Activated naive CD4-positive, alpha-beta T cell treated with anti-CD3 and anti-CD28 coated beads for 36 hours (primary cell): ENCODE measurements at regions of chr9 and their contacts with region 1.

Region 1: DNA sequence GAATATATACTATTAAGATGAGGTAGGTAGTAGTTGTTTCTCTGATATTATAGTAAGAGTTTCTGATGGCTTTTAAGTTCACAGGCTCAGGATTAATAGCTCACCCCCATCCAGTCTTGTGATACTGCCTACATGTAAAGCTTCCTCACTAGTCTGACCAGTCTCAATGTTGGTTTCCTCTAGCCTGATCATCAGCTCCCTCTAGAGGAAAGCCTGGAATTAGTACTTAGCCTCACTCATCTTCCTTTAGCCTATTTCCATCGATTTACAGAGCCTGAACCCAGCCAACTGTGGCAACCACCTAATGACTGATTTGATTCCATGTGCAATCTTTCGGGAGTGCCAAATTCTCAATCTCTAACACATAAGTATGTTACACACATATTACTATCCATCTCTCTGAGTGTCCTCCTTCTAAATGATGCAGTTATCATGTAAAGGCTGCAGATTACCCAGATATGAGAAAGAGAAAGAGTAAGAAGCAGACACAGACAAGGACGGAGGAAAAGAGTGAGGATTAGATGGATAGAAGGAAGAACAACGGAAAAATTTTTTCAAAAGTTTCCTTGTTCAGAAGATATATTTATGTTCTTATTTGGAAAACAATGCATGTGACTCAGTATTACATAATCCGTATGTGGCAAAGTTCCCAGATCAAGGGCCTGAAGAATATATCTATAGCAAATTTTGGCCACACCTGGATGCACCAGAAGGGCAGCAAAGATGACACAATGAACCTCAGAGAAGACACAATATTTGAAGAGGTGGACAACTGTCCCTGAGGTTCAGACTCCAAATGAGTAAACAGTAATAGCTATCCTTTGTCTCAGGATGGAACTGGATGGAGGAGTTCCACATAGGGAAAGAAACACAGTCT is 333.7 kb downstream of the ELAVL2 start:
- DNase-seq: no peak
- H3K4me3 Mint-ChIP-seq: no peak overlapping the region
- H3K27ac Mint-ChIP-seq: no peak overlapping the region
- H3K4me1 Mint-ChIP-seq: no peaks in the 10 kb centered on the region
- H3K27me3 Mint-ChIP-seq: no peaks in the 10 kb centered on the region

Region 2: DNA sequence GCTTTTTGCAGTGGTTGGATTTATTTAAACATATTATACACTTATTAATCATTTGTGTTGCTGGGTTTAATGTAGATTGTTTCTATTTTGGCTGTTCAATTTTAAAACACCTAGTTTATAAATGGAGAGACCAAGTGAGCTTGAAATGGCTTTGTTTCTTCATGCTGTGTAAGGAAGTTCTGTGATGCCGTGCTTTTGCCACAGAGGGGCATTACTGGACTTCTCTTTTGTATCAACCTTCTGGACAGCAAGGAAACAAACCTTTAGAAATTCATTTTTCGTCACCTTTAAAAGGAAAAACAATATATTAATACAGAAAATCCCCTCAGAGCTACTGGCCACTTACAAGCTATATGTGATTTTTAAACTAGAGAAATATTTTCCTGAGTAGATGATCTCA is 963.9 kb before region 1 on chr9:
- CTCF ChIA-PET with region 1: no interaction called
- intact Hi-C with region 1: loop called (anchors 10 kb)
- DNase-seq: no peak
- H3K4me3 Mint-ChIP-seq: no peak overlapping the region
- H3K27ac Mint-ChIP-seq: no peak overlapping the region
- H3K4me1 Mint-ChIP-seq: no peaks in the 10 kb centered on the region
- H3K27me3 Mint-ChIP-seq: no peaks in the 10 kb centered on the region

Region 3: GRCh38 chr9:23123048-23123632 is 369.2 kb before region 1 on chr9:
- CTCF ChIA-PET with region 1: no interaction called
- intact Hi-C with region 1: loop called (anchors 10 kb)
- DNase-seq: peak; percentile 4
- H3K4me3 Mint-ChIP-seq: no peak overlapping the region
- H3K27ac Mint-ChIP-seq: peak overlapping the region; percentile 18
- H3K4me1 Mint-ChIP-seq: no peaks in the 10 kb centered on the region
- H3K27me3 Mint-ChIP-seq: no peaks in the 10 kb centered on the region

Region 4: DNA sequence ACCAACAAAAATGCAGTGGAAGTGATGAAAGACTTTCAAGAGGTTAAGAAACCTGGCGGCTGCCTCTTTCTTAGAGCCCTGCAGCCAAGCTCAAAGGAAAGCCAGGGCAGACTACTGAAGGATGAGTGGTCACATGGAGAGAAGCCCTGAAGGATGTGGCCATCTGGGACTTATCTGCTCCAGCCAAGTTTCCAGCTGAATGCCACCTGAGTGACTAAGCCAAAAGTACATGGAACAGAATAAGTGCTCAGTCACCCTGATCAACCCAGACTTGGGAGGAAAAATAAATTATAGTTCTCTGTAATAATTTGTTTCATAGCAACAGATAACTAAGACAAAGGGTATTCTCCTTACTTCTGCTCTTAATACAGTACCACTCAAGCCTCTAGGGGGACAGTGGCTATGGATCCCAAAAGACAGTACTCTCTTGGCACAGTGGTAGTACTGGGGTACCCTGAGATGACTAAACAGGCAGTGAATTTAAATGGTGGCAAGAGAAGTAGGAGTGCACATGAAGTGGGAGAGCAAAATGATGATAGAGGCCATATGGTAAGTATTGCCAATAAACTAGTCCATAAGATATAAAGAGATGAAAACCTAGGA is 151.4 kb after region 1 on chr9:
- CTCF ChIA-PET with region 1: no interaction called
- intact Hi-C with region 1: no loop called
- DNase-seq: no peak
- H3K4me3 Mint-ChIP-seq: no peak overlapping the region
- H3K27ac Mint-ChIP-seq: no peak overlapping the region
- H3K4me1 Mint-ChIP-seq: no peaks in the 10 kb centered on the region
- H3K27me3 Mint-ChIP-seq: no peaks in the 10 kb centered on the region